OCI-LY7 (cell line): ENCODE measurements at regions of chr6 and their contacts with region 1.

Region 1: GRCh38 chr6:356828-357251 is 34.7 kb upstream of the IRF4 start:
- DNase-seq: peak; percentile 83
- H3K4me3 ChIP-seq: peak overlapping the region; percentile 10
- H3K27ac ChIP-seq: peak overlapping the region; percentile 86
- H3K4me1 ChIP-seq: peaks cover 100% of the 10 kb centered on the region
- CTCF ChIP-seq: no peak

Region 2: GRCh38 chr6:313087-313486 is 43.8 kb before region 1 on chr6:
- CTCF ChIA-PET with region 1: interaction called, 4 read pairs
- POLR2A ChIA-PET with region 1: interaction called, 17 read pairs
- intact Hi-C with region 1: no loop called
- DNase-seq: peak; percentile 63
- H3K4me3 ChIP-seq: peak overlapping the region; percentile 28
- H3K27ac ChIP-seq: peak overlapping the region; percentile 57
- H3K4me1 ChIP-seq: peaks cover 89% of the 10 kb centered on the region
- CTCF ChIP-seq: no peak

Region 3: DNA sequence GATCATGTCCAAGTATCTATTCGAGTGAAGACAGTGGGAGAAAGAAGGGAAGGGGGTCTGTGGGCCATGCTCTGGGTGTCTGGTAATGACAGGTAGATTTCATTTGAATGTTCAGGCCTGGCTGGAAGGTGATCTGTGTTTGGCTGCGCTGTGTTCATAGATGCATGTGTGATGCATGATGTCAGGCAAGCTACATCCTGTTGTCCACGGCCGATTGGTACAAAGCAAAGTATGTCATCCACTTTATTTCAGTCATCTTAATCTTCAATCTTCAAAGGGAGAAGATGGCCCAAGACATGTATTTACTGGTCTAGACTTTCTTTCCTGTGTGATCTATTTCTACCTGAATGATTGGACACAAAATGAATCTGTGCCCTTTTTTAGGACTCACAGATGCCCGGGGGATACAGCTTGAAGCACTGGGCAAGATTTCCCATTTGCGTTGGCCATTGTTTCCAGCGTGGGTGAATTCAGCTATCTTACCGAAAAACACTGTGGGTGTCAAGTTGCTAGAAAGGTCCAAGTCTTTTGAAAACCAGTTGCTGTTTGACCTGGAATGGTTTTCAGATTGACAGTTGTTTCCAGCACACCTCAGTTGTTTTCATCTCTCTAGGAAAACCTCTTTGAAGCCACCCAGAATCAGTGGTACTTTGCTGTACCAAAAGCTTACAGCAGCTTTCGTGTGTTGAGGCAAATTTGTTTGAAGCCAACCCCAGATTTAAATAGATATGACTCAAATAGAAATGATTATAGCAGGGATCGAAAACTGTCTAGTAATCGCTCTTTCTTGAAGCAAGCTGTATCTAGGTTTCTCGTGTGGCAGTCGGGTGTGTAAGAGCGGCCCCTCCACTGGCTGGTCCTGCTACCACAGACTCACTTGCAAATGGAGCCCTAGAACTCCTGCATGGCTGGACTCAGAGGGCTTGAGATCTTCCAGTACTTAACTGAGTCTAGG is 37.4 kb before region 1 on chr6:
- CTCF ChIA-PET with region 1: interaction called, 8 read pairs
- POLR2A ChIA-PET with region 1: interaction called, 42 read pairs
- intact Hi-C with region 1: no loop called
- DNase-seq: no peak
- H3K4me3 ChIP-seq: no peak overlapping the region
- H3K27ac ChIP-seq: no peak overlapping the region
- H3K4me1 ChIP-seq: peaks cover 100% of the 10 kb centered on the region
- CTCF ChIP-seq: no peak

Region 4: DNA sequence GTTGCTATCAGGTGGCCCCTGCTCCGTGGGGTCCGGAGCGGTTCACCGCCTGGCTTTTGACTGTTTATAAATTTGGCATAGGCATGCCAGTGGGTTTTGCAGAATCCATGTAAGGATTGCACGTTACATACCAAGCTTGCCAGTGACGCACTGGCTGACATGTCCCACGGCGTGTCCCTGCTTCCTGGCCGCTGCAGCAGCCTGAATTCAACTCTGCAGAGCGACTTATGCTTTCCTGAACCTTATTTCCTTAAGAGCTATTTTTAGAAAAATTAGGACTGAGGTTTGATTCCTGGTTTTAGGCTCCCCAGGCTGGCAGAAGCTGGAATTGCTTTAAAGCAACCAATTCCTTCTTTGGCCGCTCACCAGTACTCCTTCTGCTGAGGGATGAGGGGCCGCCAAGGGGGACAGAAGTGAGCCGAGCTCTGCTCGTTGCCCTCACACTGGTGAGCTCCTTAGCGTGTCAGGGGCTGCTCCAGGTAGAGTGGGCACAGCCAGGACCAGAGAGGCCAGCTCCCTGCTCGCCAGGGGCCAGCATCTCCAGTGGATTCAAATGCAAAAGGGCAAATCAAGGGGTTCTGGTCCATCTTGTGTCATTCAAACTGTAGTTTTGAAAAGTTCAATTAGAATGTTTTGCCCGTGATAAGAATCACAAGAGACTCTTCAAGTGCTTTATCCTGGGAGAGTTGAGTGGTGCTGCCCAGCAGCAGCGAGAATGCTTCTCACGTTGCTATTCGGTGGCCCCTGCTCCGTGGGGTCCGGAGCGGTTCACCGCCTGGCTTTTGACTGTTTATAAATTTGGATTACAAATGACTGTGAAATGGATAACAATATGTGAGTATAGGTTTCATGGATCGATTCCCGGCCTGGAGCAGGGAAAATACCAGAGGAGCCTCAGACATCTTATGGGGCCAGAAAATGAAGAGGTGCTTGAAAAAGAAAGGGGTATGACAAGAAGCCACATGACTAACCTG is 17.2 kb after region 1 on chr6:
- CTCF ChIA-PET with region 1: interaction called, 4 read pairs
- POLR2A ChIA-PET with region 1: interaction called, 81 read pairs
- intact Hi-C with region 1: no loop called
- DNase-seq: no peak
- H3K4me3 ChIP-seq: no peak overlapping the region
- H3K27ac ChIP-seq: no peak overlapping the region
- H3K4me1 ChIP-seq: peaks cover 49% of the 10 kb centered on the region
- CTCF ChIP-seq: no peak

Region 5: GRCh38 chr6:399785-400534 is 43.1 kb after region 1 on chr6:
- CTCF ChIA-PET with region 1: interaction called, 3 read pairs
- POLR2A ChIA-PET with region 1: interaction called, 13 read pairs
- intact Hi-C with region 1: no loop called
- DNase-seq: peak; percentile 73
- H3K4me3 ChIP-seq: no peak overlapping the region
- H3K27ac ChIP-seq: peak overlapping the region; percentile 15
- H3K4me1 ChIP-seq: peaks cover 71% of the 10 kb centered on the region
- CTCF ChIP-seq: no peak

Region 6: DNA sequence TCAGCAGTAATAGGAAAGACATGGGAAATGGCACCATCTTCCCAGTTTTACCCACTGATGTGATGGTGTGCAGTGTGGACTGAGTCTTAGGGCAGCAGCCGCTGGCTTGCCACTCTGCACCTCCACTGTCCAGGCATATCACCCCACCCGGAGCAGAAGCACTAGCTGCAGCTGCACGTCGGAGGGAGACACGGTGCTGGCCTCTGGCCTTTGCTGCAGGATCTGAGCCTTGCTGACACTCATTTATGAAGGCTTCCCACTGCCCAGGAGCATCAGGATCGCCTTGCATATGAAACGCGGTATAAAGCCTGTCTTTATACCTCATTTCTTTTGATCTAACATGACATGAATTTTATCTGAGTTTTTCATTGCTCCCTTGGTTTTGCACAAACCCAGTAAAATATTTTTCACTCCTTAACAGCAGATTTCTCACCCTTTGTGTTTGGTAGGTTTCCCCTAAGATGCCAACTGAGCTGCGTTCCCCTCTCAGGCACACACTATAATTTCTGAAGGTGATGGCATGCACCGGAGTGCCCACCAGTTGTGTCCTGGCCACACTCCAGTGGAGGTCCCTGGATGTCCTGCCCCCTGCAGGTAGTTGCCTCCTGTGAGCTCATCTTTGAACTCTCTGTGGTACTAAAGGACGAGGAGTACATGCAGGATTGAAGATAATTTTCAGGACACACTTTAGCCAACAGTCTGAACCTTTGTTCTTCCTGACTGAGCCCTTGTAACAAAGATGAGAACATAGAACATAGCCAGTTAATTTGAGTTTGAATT is 345.1 kb after region 1 on chr6:
- CTCF ChIA-PET with region 1: no interaction called
- POLR2A ChIA-PET with region 1: no interaction called
- intact Hi-C with region 1: no loop called
- DNase-seq: peak; percentile 22
- H3K4me3 ChIP-seq: no peak overlapping the region
- H3K27ac ChIP-seq: no peak overlapping the region
- H3K4me1 ChIP-seq: no peaks in the 10 kb centered on the region
- CTCF ChIP-seq: peak; percentile 53

Region 7: GRCh38 chr6:816510-817084 is 459.8 kb after region 1 on chr6:
- CTCF ChIA-PET with region 1: no interaction called
- POLR2A ChIA-PET with region 1: no interaction called
- intact Hi-C with region 1: no loop called
- DNase-seq: no peak
- H3K4me3 ChIP-seq: no peak overlapping the region
- H3K27ac ChIP-seq: no peak overlapping the region
- H3K4me1 ChIP-seq: no peaks in the 10 kb centered on the region
- CTCF ChIP-seq: no peak